H1 (cell line): ENCODE measurements at regions of chr19 and their contacts with region 1.

Region 1: GRCh38 chr19:52189735-52190486 is at the start of gene PPP2R1A:
- DNase-seq: peak; percentile 98 to 100
- H3K4me3 ChIP-seq: peak within 1 kb of the TSS; percentile 71 to 95 (median 88)
- H3K27ac ChIP-seq: peak within 1 kb of the TSS; percentile 98
- H3K4me1 ChIP-seq: peaks cover 3 to 8% (median 5%) of the 10 kb centered on the region in 4 experiments
- H3K27me3 ChIP-seq: no peaks in the 10 kb centered on the region
- CTCF ChIP-seq: no peak
- EP300 ChIP-seq: no peak
- POLR2A ChIP-seq: peak; percentile 70 to 87; a peak in 2 of 3 replicates
- RAD21 ChIP-seq: no peak
- total RNA-seq, gene PPP2R1A: 378 and 382 TPM in 2 replicates

Region 2: DNA sequence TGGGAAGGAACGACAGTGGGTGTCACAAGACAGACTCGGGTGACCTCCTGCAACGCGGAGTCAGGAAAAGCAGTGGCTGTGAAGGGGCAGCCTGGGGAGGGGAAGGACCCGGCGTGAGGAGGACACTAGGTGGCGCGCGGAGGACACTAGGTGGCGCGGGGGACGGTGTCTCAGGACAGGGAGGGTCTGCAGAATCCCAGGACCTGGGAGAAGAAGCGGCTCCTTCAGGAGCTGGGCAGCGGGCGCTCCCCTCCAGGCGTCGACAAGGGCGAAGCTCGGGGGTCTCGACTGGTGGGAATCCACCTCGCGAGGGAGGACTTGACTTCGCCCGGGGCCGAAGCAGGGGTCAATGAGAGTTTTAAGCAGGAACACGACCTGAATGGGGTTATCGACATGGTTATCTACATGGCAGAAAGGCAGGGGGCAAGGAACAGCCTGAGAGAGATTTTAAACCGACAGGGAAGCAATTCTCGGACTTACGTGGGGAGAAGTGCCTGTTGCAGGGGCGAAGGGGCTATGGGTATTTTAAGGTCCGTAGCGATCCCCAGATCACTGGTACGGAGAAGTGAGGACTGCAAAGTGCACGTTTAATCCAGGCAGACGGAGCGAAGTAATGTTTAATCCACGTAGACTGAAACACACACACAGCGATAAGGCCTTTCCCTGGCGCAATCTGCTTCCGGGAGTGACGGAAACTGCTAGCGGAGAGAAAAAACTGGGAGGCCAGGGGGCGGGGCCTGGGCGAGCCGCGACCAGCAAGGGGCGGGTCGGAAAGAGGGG is 50.5 kb before region 1 on chr19 and contains the start of gene ZNF616:
- CTCF ChIA-PET with region 1: interaction called, 11 read pairs
- POLR2A ChIA-PET with region 1: interaction called, 25 read pairs
- DNase-seq: peak; percentile 85 to 99
- H3K4me3 ChIP-seq: peak within 1 kb of the TSS; percentile 82 to 99 (median 96)
- H3K27ac ChIP-seq: peak within 1 kb of the TSS; percentile 81
- H3K4me1 ChIP-seq: peaks cover 0 to 4% (median 0%) of the 10 kb centered on the region in 4 experiments; a peak in 2 of 7 replicates
- H3K27me3 ChIP-seq: no peaks in the 10 kb centered on the region
- CTCF ChIP-seq: peak; percentile 70 to 80 (median 73)
- EP300 ChIP-seq: no peak
- POLR2A ChIP-seq: peak; percentile 47 to 64; a peak in 2 of 3 replicates
- RAD21 ChIP-seq: peak; percentile 73 to 82
- total RNA-seq, gene ZNF616: 40.2 and 40.5 TPM in 2 replicates

Region 3: DNA sequence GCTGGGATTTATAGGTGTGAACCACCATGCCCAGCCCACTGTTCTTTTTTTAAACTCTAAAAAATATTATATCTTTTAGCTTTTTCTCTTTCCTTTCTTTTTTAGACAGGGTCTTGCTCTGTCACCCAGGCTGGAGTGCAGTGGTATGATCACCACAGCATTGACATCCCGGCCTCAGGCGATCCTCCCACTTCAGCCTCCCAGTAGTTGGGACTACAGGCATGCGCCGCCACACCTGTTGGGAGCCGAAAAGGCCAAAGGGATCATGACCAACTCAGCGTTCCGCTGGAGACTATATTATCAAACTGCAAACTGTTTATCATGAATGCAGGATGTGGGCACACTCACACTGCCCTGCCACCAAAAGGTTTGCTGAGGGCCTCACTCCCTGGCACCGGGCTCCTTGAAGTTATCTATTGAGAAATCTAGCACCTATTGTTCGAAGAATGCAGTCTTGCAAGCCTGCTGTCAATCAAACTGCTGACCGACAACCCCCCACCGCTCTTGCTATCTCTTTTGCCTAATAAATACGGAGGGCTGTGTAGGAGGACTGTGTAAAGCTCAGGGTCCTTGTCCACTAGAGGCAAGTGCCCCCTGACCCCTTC is 13.4 kb before region 1 on chr19:
- CTCF ChIA-PET with region 1: interaction called, 8 read pairs
- POLR2A ChIA-PET with region 1: interaction called, 12 read pairs
- DNase-seq: no peak
- H3K4me3 ChIP-seq: no peak overlapping the region
- H3K27ac ChIP-seq: no peak overlapping the region
- H3K4me1 ChIP-seq: peaks cover 0 to 3% (median 1%) of the 10 kb centered on the region in 4 experiments; a peak in 2 of 7 replicates
- H3K27me3 ChIP-seq: no peaks in the 10 kb centered on the region
- CTCF ChIP-seq: no peak
- EP300 ChIP-seq: no peak
- POLR2A ChIP-seq: no peak
- RAD21 ChIP-seq: no peak

Region 4: DNA sequence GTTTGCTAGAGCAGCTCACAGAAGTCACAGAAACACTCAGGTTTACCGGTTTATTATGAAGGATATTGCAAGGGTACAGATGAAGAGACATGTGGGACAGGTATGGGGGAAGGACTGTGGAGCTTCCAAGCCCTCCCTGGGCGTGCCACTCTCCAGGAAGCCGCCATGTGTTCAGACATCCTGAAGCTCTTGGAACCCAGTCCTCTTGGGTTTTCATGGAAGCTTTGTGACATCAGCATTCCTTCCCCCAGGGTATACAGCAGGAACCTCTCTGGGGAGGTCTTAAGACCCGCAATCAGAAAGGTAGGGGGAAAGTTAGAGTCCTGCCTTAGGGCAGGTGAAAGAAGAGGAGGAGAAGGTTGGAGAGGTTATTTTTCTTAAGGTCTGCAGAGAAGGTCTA is 95.6 kb after region 1 on chr19:
- CTCF ChIA-PET with region 1: no interaction called
- POLR2A ChIA-PET with region 1: no interaction called
- DNase-seq: no peak
- H3K4me3 ChIP-seq: no peak overlapping the region
- H3K27ac ChIP-seq: no peak overlapping the region
- H3K4me1 ChIP-seq: no peaks in the 10 kb centered on the region
- H3K27me3 ChIP-seq: no peaks in the 10 kb centered on the region
- CTCF ChIP-seq: no peak
- EP300 ChIP-seq: no peak
- POLR2A ChIP-seq: no peak
- RAD21 ChIP-seq: no peak